Testis (tissue), 5 donors: ENCODE measurements at regions of chr16 and their contacts with region 1.

Region 1: GRCh38 chr16:50665128-50665878 is 15.8 kb downstream of the SNX20 start:
- DNase-seq: peak; percentile 89
- H3K4me3 ChIP-seq: peak overlapping the region; percentile 31 to 50
- H3K27ac ChIP-seq: peak overlapping the region in 1 of 2 donors; percentile 37
- H3K4me1 ChIP-seq: no peaks in the 10 kb centered on the region
- H3K27me3 ChIP-seq: no peaks in the 10 kb centered on the region
- CTCF ChIP-seq: peak; percentile 70 to 94 (median 91)
- POLR2A ChIP-seq: no peak

Region 2: DNA sequence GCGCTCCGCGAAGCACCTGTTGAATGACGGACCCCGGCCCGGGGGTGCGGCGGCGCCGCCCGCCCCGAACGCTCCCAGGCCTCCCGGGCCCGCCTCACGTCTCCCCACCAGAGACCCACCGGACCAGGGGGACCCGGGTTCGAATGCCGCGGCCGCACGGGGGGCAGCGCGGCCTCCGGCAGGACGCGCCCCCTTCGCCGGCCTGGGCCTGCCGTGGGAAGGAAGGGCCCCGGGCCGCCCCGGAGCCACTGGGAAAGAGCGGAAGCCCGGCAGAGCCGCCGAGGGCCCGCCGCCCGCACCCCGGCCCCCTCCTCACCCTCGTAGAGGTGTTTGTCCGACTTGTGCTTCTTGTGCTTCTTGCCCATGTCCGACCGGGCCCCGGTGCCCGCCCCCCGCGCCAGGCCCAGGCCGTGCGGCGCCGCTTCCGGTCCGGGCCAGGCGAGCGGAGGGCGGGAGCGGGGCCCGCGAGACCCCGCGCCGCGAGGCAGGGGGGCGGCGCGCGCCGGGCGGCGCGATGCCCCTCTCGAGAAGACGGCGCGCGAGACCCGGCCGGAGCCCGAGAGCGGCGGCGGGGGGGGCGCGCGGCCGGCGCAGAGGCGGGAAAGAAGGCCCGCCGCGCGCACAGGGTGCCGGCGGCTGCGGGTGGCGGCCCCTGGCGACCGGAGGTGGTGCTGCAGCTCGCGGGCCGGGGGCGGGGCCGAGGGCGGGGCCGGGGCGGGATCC is 296.7 kb before region 1 on chr16 and contains the start of gene BRD7:
- intact Hi-C with region 1: loop called (anchors 10 kb)
- DNase-seq: peak; percentile 67
- H3K4me3 ChIP-seq: peak within 1 kb of the TSS; percentile 85 to 94
- H3K27ac ChIP-seq: peak within 1 kb of the TSS; percentile 42 to 82
- H3K4me1 ChIP-seq: peaks cover 15% of the 10 kb centered on the region
- H3K27me3 ChIP-seq: no peaks in the 10 kb centered on the region
- CTCF ChIP-seq: peak in 1 of 3 experiments; percentile 88
- POLR2A ChIP-seq: no peak
- total RNA-seq, gene BRD7: 79.2 to 96.0 TPM

Region 3: GRCh38 chr16:50603206-50604064 is 61.9 kb before region 1 on chr16:
- intact Hi-C with region 1: no loop called
- DNase-seq: peak; percentile 43
- H3K4me3 ChIP-seq: no peak overlapping the region
- H3K27ac ChIP-seq: peak overlapping the region; percentile 69 to 76
- H3K4me1 ChIP-seq: peaks cover 39% of the 10 kb centered on the region
- H3K27me3 ChIP-seq: no peaks in the 10 kb centered on the region
- CTCF ChIP-seq: no peak
- POLR2A ChIP-seq: no peak

Region 4: DNA sequence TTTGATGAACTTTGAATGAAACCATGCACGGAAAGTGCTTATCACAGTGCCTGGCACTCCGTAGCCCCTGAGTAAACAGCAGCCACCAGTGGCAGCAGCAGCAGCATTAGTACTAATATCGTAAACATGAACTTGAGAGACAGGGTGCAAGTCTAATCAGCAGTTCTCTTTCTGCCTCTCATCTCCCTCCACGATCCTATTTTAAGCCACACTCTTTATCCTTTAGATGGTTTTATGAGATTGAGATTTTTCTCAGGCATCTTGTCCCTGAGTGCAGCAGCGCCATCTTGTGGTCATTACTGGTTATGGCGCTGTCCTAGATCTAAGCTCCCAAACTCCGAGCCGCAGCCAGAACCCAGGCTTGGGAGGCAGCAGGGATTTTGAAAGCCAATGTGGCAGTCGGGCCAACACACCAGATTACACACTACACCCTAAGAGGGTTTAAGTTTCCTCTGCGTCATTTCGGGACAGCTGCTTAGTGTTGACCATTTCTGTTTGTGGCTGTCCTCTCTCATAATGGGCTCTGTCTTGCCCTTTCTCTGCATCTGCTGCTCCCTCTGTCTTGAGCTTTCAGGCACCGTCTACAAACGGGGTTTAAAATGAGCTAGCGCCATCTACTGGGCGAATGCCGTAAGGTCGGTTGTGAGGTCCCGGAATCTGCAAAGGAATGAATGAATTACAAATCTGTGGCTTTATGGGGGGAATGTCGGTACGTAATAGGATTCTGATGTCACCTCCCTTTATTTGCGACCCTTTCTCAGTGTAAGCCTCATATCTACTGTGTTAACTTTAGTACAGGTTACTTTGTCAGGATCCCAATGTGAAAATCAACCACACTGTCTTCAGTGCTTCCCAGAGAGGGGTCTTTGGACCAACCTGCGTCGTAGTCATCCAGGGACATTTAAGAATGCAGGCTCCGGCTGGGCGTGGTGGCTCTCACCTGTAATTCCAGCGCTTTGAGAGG is 141.1 kb after region 1 on chr16:
- intact Hi-C with region 1: loop called (anchors 10 kb)
- DNase-seq: peak; percentile 92
- H3K4me3 ChIP-seq: peak overlapping the region; percentile 36 to 43
- H3K27ac ChIP-seq: peak overlapping the region in 1 of 2 donors; percentile 74
- H3K4me1 ChIP-seq: no peaks in the 10 kb centered on the region
- H3K27me3 ChIP-seq: no peaks in the 10 kb centered on the region
- CTCF ChIP-seq: peak; percentile 87 to 96 (median 91)
- POLR2A ChIP-seq: no peak